Lower leg skin (tissue), 4 donors: ENCODE measurements at regions of chr14 and their contacts with region 1.

Region 1: GRCh38 chr14:34662561-34663088 is 32.7 kb upstream of the SNX6 start:
- DNase-seq: no peak
- H3K4me3 ChIP-seq: no peak overlapping the region
- CTCF ChIP-seq: no peak
- POLR2A ChIP-seq: no peak

Region 2: GRCh38 chr14:35121887-35122695 is 459.5 kb after region 1 on chr14 and contains the starts of genes PPP2R3C and PRORP:
- intact Hi-C with region 1: loop called (anchors 5 kb)
- DNase-seq: peak; percentile 95 to 98
- H3K4me3 ChIP-seq: peak within 1 kb of the TSS; percentile 53
- CTCF ChIP-seq: no peak
- POLR2A ChIP-seq: peak in 1 of 2 donors; percentile 31
- total RNA-seq, gene PPP2R3C: 4.3 to 20.8 (median 6.8) TPM
- total RNA-seq, gene PRORP: 24.1 to 29.6 (median 25.3) TPM